ENCODE measurements at regions of chr19 and their contacts with region 1.

Region 1: GRCh38 chr19:11881151-11881800 is 6.3 kb upstream of the ZNF69 start:
- DNase-seq: peak; percentile 35
- H3K4me3 Mint-ChIP-seq: no peak overlapping the region
- H3K27ac Mint-ChIP-seq: no peak overlapping the region
- H3K4me1 Mint-ChIP-seq: no peaks in the 10 kb centered on the region
- H3K27me3 Mint-ChIP-seq: no peaks in the 10 kb centered on the region
- CTCF ChIP-seq: peak; percentile 46

Region 2: DNA sequence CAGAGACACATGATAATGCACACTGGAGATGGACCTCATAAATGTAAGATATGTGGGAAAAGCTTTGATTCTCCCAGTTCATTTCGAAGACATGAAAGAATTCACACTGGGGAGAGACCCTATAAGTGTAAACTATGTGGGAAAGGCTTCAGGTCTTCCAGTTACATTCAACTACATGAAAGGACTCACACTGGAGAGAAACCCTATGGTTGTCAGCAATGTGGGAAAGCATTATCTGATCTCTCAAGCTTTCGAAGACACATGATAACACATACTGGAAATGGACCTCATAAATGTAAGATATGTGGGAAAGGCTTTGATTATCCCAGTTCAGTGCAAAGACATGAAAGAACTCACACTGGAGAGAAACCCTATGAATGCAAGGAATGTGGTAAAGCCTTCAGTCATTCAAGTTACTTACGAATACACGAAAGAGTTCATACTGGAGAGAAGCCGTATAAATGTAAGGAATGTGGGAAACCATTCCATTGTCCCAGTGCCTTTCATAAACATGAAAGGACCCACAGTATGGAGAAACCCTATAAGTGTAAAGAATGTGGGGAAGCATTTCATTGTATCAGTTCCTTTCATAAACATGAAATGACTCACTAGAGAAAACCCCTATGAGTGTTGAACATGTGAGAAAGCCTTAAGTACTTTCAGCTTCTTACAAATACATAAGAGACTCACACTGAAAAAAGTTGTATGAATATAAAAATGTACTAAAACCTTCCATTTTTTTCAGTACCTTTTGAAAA is 99.8 kb before region 1 on chr19:
- CTCF ChIA-PET with region 1: no interaction called
- intact Hi-C with region 1: no loop called
- DNase-seq: no peak
- H3K4me3 Mint-ChIP-seq: no peak overlapping the region
- H3K27ac Mint-ChIP-seq: no peak overlapping the region
- H3K4me1 Mint-ChIP-seq: no peaks in the 10 kb centered on the region
- H3K27me3 Mint-ChIP-seq: no peaks in the 10 kb centered on the region
- CTCF ChIP-seq: no peak

Region 3: GRCh38 chr19:12247644-12248222 is 366.5 kb after region 1 on chr19:
- CTCF ChIA-PET with region 1: no interaction called
- intact Hi-C with region 1: loop called (anchors 5 kb)
- DNase-seq: no peak
- H3K4me3 Mint-ChIP-seq: no peak overlapping the region
- H3K27ac Mint-ChIP-seq: no peak overlapping the region
- H3K4me1 Mint-ChIP-seq: no peaks in the 10 kb centered on the region
- H3K27me3 Mint-ChIP-seq: no peaks in the 10 kb centered on the region
- CTCF ChIP-seq: no peak